Left ventricle myocardium inferior (tissue), 1 donor: ENCODE measurements at regions of chr6 and their contacts with region 1.

Region 1: DNA sequence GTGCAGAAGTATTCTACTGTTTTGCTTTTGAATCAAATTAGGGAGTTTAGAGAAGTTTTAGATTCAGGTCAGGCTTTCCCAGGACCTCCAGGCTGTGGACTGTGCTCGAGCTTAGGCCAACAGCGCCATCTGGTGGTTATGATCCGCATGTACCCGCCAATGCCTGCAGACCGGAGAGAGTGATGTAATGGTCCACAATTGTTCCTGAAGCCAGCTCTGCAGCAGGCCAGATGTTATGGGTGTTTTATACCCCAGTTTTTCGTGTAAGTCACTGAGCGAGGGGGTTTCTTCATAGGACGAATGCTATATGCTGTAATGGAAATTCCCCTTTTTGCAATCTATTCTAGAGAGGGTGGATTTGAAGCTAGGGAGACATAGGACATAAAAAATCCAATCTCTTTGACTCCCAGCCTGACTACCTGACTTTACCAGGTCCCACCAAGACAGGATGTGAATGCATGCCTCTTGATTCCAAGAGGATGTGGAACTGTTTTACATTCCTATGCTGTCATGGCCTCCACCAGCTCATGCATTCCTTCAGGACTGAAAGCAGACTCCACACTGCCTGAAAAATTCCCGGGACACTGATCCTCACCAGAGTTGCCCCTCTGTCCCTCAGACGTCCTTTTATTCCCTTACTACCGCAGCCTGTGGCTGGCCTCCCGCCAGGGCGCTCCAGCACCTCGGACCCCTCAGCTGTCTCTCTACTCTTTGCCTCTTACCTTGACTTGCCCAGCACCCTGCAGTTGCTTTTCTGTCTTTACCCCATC is 41.2 kb upstream of the LY86 start:
- DNase-seq: peak; percentile 86
- H3K4me3 ChIP-seq: peak overlapping the region; percentile 68
- H3K27ac ChIP-seq: peak overlapping the region; percentile 66
- H3K4me1 ChIP-seq: peaks cover 14% of the 10 kb centered on the region
- H3K27me3 ChIP-seq: peaks cover 20% of the 10 kb centered on the region
- CTCF ChIP-seq: peak; percentile 94

Region 2: GRCh38 chr6:6057424-6058053 is 489.8 kb before region 1 on chr6:
- intact Hi-C with region 1: loop called (anchors 5 kb)
- DNase-seq: no peak
- H3K4me3 ChIP-seq: no peak overlapping the region
- H3K27ac ChIP-seq: no peak overlapping the region
- H3K4me1 ChIP-seq: no peaks in the 10 kb centered on the region
- H3K27me3 ChIP-seq: peaks cover 45% of the 10 kb centered on the region
- CTCF ChIP-seq: peak; percentile 79

Region 3: GRCh38 chr6:6858533-6858982 is 311.3 kb after region 1 on chr6:
- intact Hi-C with region 1: no loop called
- DNase-seq: no peak
- H3K4me3 ChIP-seq: no peak overlapping the region
- H3K27ac ChIP-seq: no peak overlapping the region
- H3K4me1 ChIP-seq: peaks cover 16% of the 10 kb centered on the region
- H3K27me3 ChIP-seq: no peaks in the 10 kb centered on the region
- CTCF ChIP-seq: no peak